Activated CD4-positive, alpha-beta memory T cell treated with anti-CD3 and anti-CD28 coated beads for 36 hours (primary cell): ENCODE measurements at regions of chr5 and their contacts with region 1.

Region 1: GRCh38 chr5:39217365-39218281 is 1.7 kb downstream of the FYB1 start:
- DNase-seq: peak; percentile 87
- H3K4me3 Mint-ChIP-seq: peak overlapping the region; percentile 83
- H3K27ac Mint-ChIP-seq: peak overlapping the region; percentile 96
- H3K4me1 Mint-ChIP-seq: peaks cover 69% of the 10 kb centered on the region
- H3K27me3 Mint-ChIP-seq: no peaks in the 10 kb centered on the region

Region 2: DNA sequence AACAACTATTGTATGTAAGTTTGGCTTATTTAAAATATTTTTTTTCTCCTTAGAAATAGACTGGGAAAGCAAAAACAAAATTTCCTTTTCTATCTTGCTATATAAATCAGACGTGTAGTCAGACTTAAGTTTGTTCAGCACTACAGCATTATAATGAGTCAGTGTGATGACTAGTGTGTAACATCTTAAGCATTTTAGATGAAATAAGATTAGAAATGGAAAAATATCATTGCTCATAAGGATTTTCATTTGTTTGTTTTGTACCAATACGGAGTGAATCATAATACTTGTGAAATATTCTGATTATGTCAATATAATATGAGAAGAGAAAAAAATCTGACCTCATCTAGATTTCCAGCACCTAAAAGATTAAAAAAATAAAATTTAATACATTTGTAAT is 78.7 kb before region 1 on chr5:
- CTCF ChIA-PET with region 1: interaction called, 18 read pairs
- POLR2A ChIA-PET with region 1: no interaction called
- intact Hi-C with region 1: no loop called
- DNase-seq: no peak
- H3K4me3 Mint-ChIP-seq: no peak overlapping the region
- H3K27ac Mint-ChIP-seq: no peak overlapping the region
- H3K4me1 Mint-ChIP-seq: peaks cover 36% of the 10 kb centered on the region
- H3K27me3 Mint-ChIP-seq: no peaks in the 10 kb centered on the region

Region 3: GRCh38 chr5:39164529-39165402 is 52.9 kb before region 1 on chr5:
- CTCF ChIA-PET with region 1: interaction called, 34 read pairs
- POLR2A ChIA-PET with region 1: interaction called, 5 read pairs
- intact Hi-C with region 1: no loop called
- DNase-seq: peak; percentile 42
- H3K4me3 Mint-ChIP-seq: peak overlapping the region; percentile 75
- H3K27ac Mint-ChIP-seq: peak overlapping the region; percentile 96
- H3K4me1 Mint-ChIP-seq: peaks cover 80% of the 10 kb centered on the region
- H3K27me3 Mint-ChIP-seq: no peaks in the 10 kb centered on the region

Region 4: GRCh38 chr5:39194466-39195136 is 23.0 kb before region 1 on chr5:
- CTCF ChIA-PET with region 1: interaction called, 75 read pairs
- POLR2A ChIA-PET with region 1: interaction called, 79 read pairs
- intact Hi-C with region 1: no loop called
- DNase-seq: no peak
- H3K4me3 Mint-ChIP-seq: peak overlapping the region; percentile 75
- H3K27ac Mint-ChIP-seq: peak overlapping the region; percentile 91
- H3K4me1 Mint-ChIP-seq: peaks cover 66% of the 10 kb centered on the region
- H3K27me3 Mint-ChIP-seq: no peaks in the 10 kb centered on the region

Region 5: GRCh38 chr5:39256477-39257235 is 39.0 kb after region 1 on chr5:
- CTCF ChIA-PET with region 1: interaction called, 8 read pairs
- POLR2A ChIA-PET with region 1: no interaction called
- intact Hi-C with region 1: loop called (anchors 1 kb)
- DNase-seq: no peak
- H3K4me3 Mint-ChIP-seq: peak overlapping the region; percentile 2
- H3K27ac Mint-ChIP-seq: peak overlapping the region; percentile 21
- H3K4me1 Mint-ChIP-seq: peaks cover 15% of the 10 kb centered on the region
- H3K27me3 Mint-ChIP-seq: no peaks in the 10 kb centered on the region

Region 6: DNA sequence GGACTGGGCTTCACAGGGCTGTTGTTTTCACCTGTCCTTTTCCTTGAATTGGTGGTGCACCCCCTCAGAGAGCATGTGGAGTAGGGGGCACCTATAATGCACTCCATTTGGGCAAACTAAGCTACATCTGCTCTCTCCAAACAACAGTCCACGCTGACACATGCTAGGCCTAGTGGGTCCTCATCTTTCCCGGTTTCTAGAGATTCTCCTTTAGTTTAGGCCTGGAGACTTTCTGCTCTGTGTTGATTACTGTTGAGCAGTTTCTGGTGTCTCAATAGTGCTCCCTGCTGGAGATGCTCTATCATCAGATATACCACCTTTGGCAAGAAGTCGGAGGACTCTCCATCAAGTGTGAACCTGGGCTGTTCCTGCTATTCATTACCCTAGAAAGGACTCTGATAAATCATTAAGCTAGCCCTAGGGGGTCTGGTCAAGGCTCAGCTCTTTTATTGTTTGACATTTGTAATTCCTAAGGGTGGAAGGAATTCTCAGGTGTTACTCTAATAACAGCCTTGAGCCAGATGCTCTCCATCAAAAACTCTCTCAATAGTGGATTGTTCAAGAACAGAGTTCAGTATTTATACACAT is 65.7 kb after region 1 on chr5:
- CTCF ChIA-PET with region 1: interaction called, 195 read pairs
- POLR2A ChIA-PET with region 1: interaction called, 8 read pairs
- intact Hi-C with region 1: loop called (anchors 1 kb)
- DNase-seq: peak; percentile 60
- H3K4me3 Mint-ChIP-seq: peak overlapping the region; percentile 4
- H3K27ac Mint-ChIP-seq: peak overlapping the region; percentile 68
- H3K4me1 Mint-ChIP-seq: peaks cover 31% of the 10 kb centered on the region
- H3K27me3 Mint-ChIP-seq: peaks cover 3% of the 10 kb centered on the region

Region 7: GRCh38 chr5:39498247-39498952 is 280.8 kb after region 1 on chr5:
- CTCF ChIA-PET with region 1: no interaction called
- POLR2A ChIA-PET with region 1: no interaction called
- intact Hi-C with region 1: no loop called
- DNase-seq: no peak
- H3K4me3 Mint-ChIP-seq: no peak overlapping the region
- H3K27ac Mint-ChIP-seq: no peak overlapping the region
- H3K4me1 Mint-ChIP-seq: no peaks in the 10 kb centered on the region
- H3K27me3 Mint-ChIP-seq: peaks cover 2% of the 10 kb centered on the region